ENCODE measurements at regions of chr7 and their contacts with region 1.

Region 1: GRCh38 chr7:49791088-49791741 is 17.8 kb downstream of the VWC2 start:
- DNase-seq: no peak
- H3K4me3 Mint-ChIP-seq: no peak overlapping the region
- H3K27ac Mint-ChIP-seq: no peak overlapping the region
- H3K4me1 Mint-ChIP-seq: no peaks in the 10 kb centered on the region
- H3K27me3 Mint-ChIP-seq: peaks cover 2% of the 10 kb centered on the region

Region 2: GRCh38 chr7:49001610-49002033 is 789.6 kb before region 1 on chr7:
- intact Hi-C with region 1: loop called (anchors 5 kb)
- DNase-seq: peak; percentile 2
- H3K4me3 Mint-ChIP-seq: no peak overlapping the region
- H3K27ac Mint-ChIP-seq: no peak overlapping the region
- H3K4me1 Mint-ChIP-seq: no peaks in the 10 kb centered on the region
- H3K27me3 Mint-ChIP-seq: no peaks in the 10 kb centered on the region

Region 3: DNA sequence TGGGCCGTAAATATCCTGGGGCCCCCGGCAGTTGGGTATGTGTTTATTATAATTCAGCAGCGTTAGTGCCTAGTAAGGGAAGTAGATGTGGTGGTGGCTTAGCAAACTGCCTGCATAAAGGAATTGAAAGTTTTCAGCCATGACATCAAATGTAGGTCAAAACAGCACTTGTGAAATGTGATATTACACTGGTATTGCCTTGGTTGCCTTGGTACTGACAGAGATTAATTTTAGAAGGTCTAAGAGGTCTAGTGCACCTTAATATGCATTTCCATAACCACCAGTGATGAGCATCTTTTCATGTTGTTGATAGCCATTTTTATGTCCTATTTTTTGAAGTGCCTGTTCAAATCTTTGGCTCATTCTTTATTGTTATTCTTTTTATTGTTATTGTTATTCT is 32.4 kb after region 1 on chr7:
- intact Hi-C with region 1: no loop called
- DNase-seq: no peak
- H3K4me3 Mint-ChIP-seq: no peak overlapping the region
- H3K27ac Mint-ChIP-seq: no peak overlapping the region
- H3K4me1 Mint-ChIP-seq: no peaks in the 10 kb centered on the region
- H3K27me3 Mint-ChIP-seq: no peaks in the 10 kb centered on the region

Region 4: DNA sequence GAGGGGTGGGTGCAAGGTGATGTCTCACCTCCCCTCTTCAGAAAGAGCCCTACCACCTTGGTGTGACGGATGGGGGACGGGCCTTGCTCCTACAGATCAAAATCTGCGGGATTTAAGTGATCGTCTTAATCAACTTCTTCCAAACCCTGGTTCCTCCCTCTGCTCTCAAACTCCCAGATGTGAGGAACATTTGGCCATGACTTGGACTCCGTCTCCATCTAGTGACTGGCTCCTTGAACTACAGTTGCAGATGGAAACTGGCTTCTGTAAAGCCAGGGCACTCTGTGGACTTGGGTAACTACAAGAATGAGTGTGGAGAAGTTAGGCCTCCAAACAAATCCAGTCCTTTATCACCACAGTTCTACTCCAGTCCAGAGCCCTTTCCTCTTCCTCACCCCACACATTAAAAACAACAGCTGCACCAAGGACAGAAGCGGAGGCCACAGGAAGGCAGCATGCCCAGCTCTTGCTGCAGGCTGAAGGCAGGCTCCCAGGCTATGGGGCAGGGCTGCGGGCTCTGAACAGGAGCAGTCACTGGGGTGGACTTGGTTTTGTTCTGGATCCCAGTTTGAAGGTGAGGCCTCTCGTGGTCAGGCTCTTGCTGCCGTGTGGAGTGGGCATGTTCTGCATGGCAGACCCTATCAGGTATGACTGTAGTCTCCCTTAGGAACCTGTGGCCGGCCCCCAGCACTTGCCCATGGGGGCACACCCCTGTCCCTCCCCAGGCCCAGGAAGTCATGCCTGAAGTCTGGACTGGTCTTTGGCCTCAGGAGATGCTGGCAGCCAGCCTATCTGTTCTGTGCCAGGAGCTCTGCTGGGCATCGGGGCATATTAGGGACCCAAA is 61.6 kb after region 1 on chr7:
- intact Hi-C with region 1: no loop called
- DNase-seq: no peak
- H3K4me3 Mint-ChIP-seq: no peak overlapping the region
- H3K27ac Mint-ChIP-seq: no peak overlapping the region
- H3K4me1 Mint-ChIP-seq: no peaks in the 10 kb centered on the region
- H3K27me3 Mint-ChIP-seq: no peaks in the 10 kb centered on the region

Measured in activated T-helper 1 cell treated with anti-CD3 and anti-CD28 coated beads, Interleukin-12 subunit alpha, Interleukin-12 subunit beta, Interleukin-2, Interleukin-4 antibody, amounts not matched to agents 30 ng/mL and 10 ng/mL and 1 ng/mL, durations not matched to agents 14 hours and 24 hours and 36 hours (primary cell).